ENCODE measurements at regions of chr5 and their contacts with region 1.

Region 1: GRCh38 chr5:14871210-14872069 is at the start of gene ANKH:
- DNase-seq: peak; percentile 86
- H3K4me3 Mint-ChIP-seq: peak within 1 kb of the TSS; percentile 96
- H3K27ac Mint-ChIP-seq: peak within 1 kb of the TSS; percentile 89
- H3K4me1 Mint-ChIP-seq: peaks cover 28% of the 10 kb centered on the region
- H3K27me3 Mint-ChIP-seq: no peaks in the 10 kb centered on the region
- total RNA-seq, gene ANKH: 123 to 128 TPM

Region 2: GRCh38 chr5:14415024-14415697 is 456.3 kb before region 1 on chr5:
- CTCF ChIA-PET with region 1: no interaction called
- POLR2A ChIA-PET with region 1: no interaction called
- intact Hi-C with region 1: loop called (anchors 5 kb)
- DNase-seq: peak; percentile 65
- H3K4me3 Mint-ChIP-seq: peak overlapping the region; percentile 67
- H3K27ac Mint-ChIP-seq: peak overlapping the region; percentile 94
- H3K4me1 Mint-ChIP-seq: peaks cover 52% of the 10 kb centered on the region
- H3K27me3 Mint-ChIP-seq: peaks cover 18% of the 10 kb centered on the region

Region 3: GRCh38 chr5:14664302-14665100 is 206.9 kb before region 1 on chr5 and contains the start of gene OTULIN:
- CTCF ChIA-PET with region 1: interaction called, 4 read pairs
- POLR2A ChIA-PET with region 1: no interaction called
- intact Hi-C with region 1: loop called (anchors 2 kb)
- DNase-seq: peak; percentile 94
- H3K4me3 Mint-ChIP-seq: peak within 1 kb of the TSS; percentile 92
- H3K27ac Mint-ChIP-seq: peak within 1 kb of the TSS; percentile 95
- H3K4me1 Mint-ChIP-seq: peaks cover 54% of the 10 kb centered on the region
- H3K27me3 Mint-ChIP-seq: no peaks in the 10 kb centered on the region
- total RNA-seq, gene OTULIN: 53.3 to 53.6 TPM

Region 4: GRCh38 chr5:14727428-14727865 is 144.0 kb before region 1 on chr5:
- CTCF ChIA-PET with region 1: interaction called, 35 read pairs
- POLR2A ChIA-PET with region 1: no interaction called
- intact Hi-C with region 1: loop called (anchors 1 kb)
- DNase-seq: peak; percentile 82
- H3K4me3 Mint-ChIP-seq: no peak overlapping the region
- H3K27ac Mint-ChIP-seq: no peak overlapping the region
- H3K4me1 Mint-ChIP-seq: peaks cover 22% of the 10 kb centered on the region
- H3K27me3 Mint-ChIP-seq: no peaks in the 10 kb centered on the region

Region 5: GRCh38 chr5:14816999-14817761 is 54.3 kb before region 1 on chr5:
- CTCF ChIA-PET with region 1: interaction called, 6 read pairs
- POLR2A ChIA-PET with region 1: interaction called, 4 read pairs
- intact Hi-C with region 1: loop called (anchors 2 kb)
- DNase-seq: peak; percentile 79
- H3K4me3 Mint-ChIP-seq: no peak overlapping the region
- H3K27ac Mint-ChIP-seq: peak overlapping the region; percentile 47
- H3K4me1 Mint-ChIP-seq: peaks cover 72% of the 10 kb centered on the region
- H3K27me3 Mint-ChIP-seq: no peaks in the 10 kb centered on the region

Region 6: DNA sequence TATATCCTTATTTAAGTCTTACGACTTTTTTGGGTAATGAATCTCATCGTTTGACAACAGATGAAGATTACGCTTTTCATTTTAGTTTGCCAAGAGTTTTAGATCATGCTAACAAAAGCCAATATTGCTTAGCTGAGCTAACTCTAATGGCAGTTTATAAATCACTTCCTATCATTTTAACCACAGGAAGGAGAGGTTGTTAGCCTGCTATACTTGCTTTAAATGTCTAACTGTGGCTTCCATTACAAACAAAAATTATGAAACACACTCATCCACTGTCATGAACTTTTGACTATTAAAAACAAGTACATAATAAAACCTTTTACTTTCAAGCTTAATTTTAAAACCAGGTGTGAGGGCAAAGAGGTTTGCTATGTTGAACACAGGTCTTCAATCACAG is 53.9 kb after region 1 on chr5:
- CTCF ChIA-PET with region 1: interaction called, 15 read pairs
- POLR2A ChIA-PET with region 1: interaction called, 9 read pairs
- intact Hi-C with region 1: loop called (anchors 1 kb)
- DNase-seq: no peak
- H3K4me3 Mint-ChIP-seq: peak overlapping the region; percentile 35
- H3K27ac Mint-ChIP-seq: peak overlapping the region; percentile 91
- H3K4me1 Mint-ChIP-seq: peaks cover 54% of the 10 kb centered on the region
- H3K27me3 Mint-ChIP-seq: no peaks in the 10 kb centered on the region

Region 7: DNA sequence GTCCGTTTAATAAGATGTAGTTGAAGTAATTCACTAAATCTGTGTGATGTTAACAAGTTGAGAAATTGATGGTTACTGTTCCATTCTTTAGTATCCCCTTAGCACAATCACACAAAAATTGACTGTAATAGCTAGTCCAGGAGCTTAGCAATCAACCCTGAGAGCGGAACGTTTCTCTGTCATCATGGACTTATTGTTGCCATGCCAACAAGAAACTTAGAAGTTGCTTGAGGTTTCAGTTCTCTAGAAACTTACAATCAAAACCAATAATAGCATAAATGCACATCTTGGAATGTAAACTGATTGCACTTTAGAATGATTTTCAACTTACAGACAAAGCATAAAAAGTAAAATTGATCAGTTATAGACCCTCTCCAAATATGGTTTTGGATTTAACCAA is 125.6 kb after region 1 on chr5:
- CTCF ChIA-PET with region 1: interaction called, 10 read pairs
- POLR2A ChIA-PET with region 1: interaction called, 6 read pairs
- intact Hi-C with region 1: loop called (anchors 1 kb)
- DNase-seq: no peak
- H3K4me3 Mint-ChIP-seq: no peak overlapping the region
- H3K27ac Mint-ChIP-seq: no peak overlapping the region
- H3K4me1 Mint-ChIP-seq: peaks cover 21% of the 10 kb centered on the region
- H3K27me3 Mint-ChIP-seq: no peaks in the 10 kb centered on the region

Region 8: GRCh38 chr5:15074651-15075050 is 203.2 kb after region 1 on chr5:
- CTCF ChIA-PET with region 1: no interaction called
- POLR2A ChIA-PET with region 1: no interaction called
- intact Hi-C with region 1: no loop called
- DNase-seq: no peak
- H3K4me3 Mint-ChIP-seq: no peak overlapping the region
- H3K27ac Mint-ChIP-seq: no peak overlapping the region
- H3K4me1 Mint-ChIP-seq: no peaks in the 10 kb centered on the region
- H3K27me3 Mint-ChIP-seq: peaks cover 4% of the 10 kb centered on the region